ENCODE measurements at regions of chr10 and their contacts with region 1.

Region 1: DNA sequence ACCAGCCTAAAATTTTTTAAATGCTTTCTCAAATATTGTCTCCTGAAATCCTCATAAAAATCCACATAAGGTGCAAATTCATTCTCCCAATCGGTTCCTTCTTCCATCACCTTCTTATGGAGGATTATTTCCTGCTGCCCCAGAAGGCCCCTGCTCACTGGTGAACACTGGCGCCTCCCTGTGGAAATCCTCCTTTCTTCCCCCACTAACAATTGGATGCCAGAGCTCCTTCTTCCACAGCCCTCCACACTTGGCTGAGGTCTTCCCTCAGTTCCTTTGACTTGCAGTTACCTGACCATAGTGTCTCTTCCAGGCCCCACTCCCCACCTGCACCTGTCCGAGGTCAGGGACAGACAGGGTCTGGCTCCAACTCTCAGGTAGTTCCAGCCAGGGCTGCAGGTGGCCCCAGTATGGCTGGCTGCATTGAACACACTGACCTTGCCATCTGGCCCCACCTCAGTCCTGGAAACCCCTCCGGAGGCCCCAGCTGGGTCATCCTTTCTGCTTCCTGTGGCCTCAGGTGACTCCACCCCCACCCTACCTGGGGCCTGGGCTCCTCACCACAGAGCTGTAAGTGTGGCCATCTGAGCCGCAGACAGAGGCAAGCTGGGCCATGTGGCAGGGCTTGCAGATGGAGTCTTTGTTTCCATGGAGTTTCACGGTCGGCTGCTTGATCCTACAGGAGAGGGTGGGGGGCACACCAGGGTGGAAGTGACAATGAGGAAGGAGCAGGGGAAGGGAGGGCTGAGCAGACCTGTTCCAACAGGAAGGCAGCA is 18.4 kb downstream of the SPOCK2 start:
- DNase-seq: no peak
- H3K4me3 Mint-ChIP-seq: no peak overlapping the region
- H3K27ac Mint-ChIP-seq: no peak overlapping the region
- H3K4me1 Mint-ChIP-seq: peaks cover 23% of the 10 kb centered on the region
- H3K27me3 Mint-ChIP-seq: no peaks in the 10 kb centered on the region

Region 2: GRCh38 chr10:71963756-71964668 is 105.9 kb before region 1 on chr10 and contains the start of gene CHST3:
- CTCF ChIA-PET with region 1: no interaction called
- POLR2A ChIA-PET with region 1: no interaction called
- DNase-seq: no peak
- H3K4me3 Mint-ChIP-seq: peak within 1 kb of the TSS; percentile 58
- H3K27ac Mint-ChIP-seq: no peak within 1 kb of the TSS
- H3K4me1 Mint-ChIP-seq: peaks cover 7% of the 10 kb centered on the region
- H3K27me3 Mint-ChIP-seq: peaks cover 59% of the 10 kb centered on the region
- total RNA-seq, gene CHST3: 0.02 TPM

Region 3: DNA sequence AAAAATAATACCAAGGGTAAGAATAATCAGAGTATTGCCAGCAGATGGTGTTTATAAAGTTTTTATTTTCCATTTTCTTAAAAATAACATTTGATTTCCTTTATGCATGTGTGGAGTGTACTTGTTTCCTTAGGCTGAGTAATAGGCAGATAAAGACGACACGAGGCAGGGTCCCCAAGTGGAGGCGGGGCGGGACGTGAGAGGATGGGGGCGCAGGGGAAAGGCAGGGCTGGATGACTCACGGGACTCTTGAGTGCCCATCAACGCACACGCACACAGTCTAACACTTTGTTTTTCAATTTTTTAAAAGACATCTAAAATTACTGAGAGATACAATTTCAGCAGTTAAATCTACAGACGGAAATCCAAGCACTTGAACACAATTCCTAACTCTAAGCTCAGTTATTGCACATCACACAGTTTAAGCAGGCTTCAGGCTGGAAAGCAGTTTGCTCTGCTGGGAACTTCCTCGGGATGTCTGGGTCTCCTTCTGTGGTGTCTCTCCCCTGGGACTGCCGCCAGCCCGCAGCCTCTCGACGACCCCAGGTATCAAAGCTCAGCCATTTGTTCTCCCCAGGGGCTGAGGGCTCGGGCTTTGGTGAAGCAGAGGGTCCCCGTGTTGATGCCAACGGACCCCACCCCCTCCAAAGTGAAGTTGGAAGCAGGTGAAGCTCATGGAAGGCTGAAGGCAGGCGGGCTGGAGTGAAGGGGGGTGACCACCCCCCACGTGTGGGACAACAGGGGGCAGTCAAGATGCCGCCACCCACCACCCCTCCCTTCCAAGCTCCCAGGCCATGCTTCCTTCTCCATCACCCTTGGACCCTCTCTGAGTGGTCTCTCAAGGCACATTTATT is 10.7 kb before region 1 on chr10:
- CTCF ChIA-PET with region 1: interaction called, 10 read pairs
- POLR2A ChIA-PET with region 1: no interaction called
- DNase-seq: no peak
- H3K4me3 Mint-ChIP-seq: no peak overlapping the region
- H3K27ac Mint-ChIP-seq: peak overlapping the region; percentile 41
- H3K4me1 Mint-ChIP-seq: peaks cover 7% of the 10 kb centered on the region
- H3K27me3 Mint-ChIP-seq: no peaks in the 10 kb centered on the region

Measured in activated CD4-positive, alpha-beta T cell treated with anti-CD3 and anti-CD28 coated beads, Interleukin-2, amount 10 ng/mL, durations not matched to agents 7 days and 5 days (primary cell).